ENCODE measurements at regions of chr22 and their contacts with region 1.

Region 1: DNA sequence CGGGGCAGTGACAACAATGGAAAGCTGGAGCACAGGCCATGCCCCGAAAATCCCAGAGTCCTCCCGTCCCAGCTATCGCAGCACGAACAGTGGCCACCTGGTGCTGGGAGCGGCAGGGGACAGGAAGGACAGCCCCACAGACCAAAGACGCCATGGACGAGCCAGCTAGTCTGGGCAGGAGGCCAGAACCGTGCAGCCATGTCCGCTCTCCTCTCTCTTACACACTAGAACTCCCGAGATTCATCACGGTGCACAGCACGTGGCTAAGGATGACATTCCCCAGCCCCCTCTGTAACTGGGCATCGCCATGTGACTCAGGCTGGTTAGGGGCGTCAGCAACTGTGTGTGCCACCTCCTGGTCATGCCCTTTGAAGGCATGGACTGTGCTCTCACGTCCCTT is 4.6 kb downstream of the CDPF1 start:
- DNase-seq: no peak
- H3K4me3 ChIP-seq: no peak overlapping the region
- H3K27ac ChIP-seq: no peak overlapping the region
- H3K4me1 ChIP-seq: no peaks in the 10 kb centered on the region
- H3K27me3 ChIP-seq: no peaks in the 10 kb centered on the region
- CTCF ChIP-seq: no peak
- POLR2A ChIP-seq: no peak

Region 2: DNA sequence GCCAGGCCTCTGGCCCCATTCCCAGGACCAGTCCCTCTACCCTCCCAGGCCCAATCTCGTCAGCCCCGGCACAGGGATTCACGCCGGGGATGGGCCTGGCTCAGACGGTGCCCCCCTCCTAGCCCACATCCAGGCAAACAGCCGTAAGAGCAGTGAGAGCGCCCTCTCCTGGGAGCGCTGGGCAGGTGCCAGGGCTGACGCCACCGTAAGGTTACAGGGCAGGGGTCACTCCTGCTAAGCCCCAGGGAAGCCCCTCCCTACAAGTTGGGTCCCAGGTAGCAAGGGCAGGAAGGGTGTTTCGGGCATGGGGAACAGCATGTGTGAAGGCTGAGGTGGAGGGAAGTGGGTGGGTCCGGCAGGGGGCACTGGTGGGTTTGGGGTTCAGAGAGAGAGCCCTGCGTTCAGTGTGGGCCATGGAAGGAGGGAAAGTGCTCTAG is 114.3 kb before region 1 on chr22:
- intact Hi-C with region 1: loop called (anchors 10 kb)
- DNase-seq: peak in 1 of 2 donors; percentile 13
- H3K4me3 ChIP-seq: no peak overlapping the region
- H3K27ac ChIP-seq: no peak overlapping the region
- H3K4me1 ChIP-seq: no peaks in the 10 kb centered on the region
- H3K27me3 ChIP-seq: no peaks in the 10 kb centered on the region
- CTCF ChIP-seq: no peak
- POLR2A ChIP-seq: no peak

Measured in uterus (tissue), 4 donors.